Kidney (tissue), 22 donors: ENCODE measurements at regions of chr13 and their contacts with region 1.

Region 1: GRCh38 chr13:27270594-27271520 is at the start of gene RASL11A:
- DNase-seq: peak; percentile 86 to 97 (median 91)
- H3K4me3 ChIP-seq: peak within 1 kb of the TSS; percentile 78 to 98 (median 85)
- H3K27ac ChIP-seq: peak within 1 kb of the TSS; percentile 95
- H3K4me1 ChIP-seq: peaks cover 10 to 20% (median 11%) of the 10 kb centered on the region in 3 donors
- H3K27me3 ChIP-seq: no peaks in the 10 kb centered on the region
- CTCF ChIP-seq: peak; percentile 71
- total RNA-seq, gene RASL11A: 42.4 TPM

Region 2: GRCh38 chr13:26985285-26985878 is 285.5 kb before region 1 on chr13:
- intact Hi-C with region 1: loop called (anchors 10 kb)
- DNase-seq: peak in 3 of 5 donors; percentile 77 to 90 (median 85)
- H3K4me3 ChIP-seq: no peak overlapping the region
- H3K27ac ChIP-seq: no peak overlapping the region
- H3K4me1 ChIP-seq: peaks cover 0 to 6% (median 5%) of the 10 kb centered on the region in 3 donors
- H3K27me3 ChIP-seq: no peaks in the 10 kb centered on the region
- CTCF ChIP-seq: peak; percentile 86

Region 3: DNA sequence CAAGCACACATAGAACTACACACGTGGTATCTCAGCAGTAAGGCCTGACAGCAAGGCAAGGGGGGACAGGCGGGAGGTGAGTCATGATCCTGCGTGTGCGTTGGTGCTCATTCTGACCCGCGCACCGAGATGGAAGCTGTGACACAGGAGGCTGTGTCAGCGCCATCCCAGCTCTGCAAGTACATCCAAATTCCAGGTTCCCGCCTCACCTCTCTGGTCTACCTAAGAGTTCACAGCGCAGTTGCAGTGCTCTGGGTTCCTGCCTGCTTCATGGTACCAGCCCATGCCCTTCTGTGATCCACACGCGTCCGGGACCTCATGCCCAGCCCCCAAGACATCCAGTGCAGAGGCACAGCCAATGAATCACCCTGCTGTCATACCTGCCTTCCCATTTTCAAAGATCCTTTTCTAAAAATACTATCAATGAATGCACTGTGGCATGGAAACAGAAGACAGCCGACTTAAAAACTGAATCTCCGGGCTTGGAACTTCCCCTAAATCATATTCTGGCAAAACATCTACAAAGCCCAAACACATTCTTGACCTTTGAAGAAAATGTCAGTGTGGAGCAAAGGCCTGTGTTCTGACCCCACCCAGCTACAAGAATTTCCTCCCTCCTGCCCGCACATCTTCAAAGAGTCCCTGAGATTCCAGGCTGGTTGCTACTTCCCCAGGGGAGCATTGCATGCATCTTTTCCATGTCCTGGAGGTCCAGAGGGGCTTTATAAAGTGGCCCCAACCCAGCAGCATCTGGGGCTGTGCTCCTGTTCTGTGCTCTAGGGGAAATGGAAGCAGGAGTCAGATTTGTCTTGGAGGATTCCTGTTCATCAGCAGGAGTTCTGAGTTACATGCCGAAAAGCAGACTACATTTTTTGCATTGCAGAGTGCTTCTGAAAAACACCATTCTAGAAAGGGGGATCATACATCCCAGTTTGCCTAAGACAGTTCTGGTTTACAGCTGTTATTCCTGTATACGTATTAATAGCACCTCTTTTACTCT is 234.6 kb before region 1 on chr13:
- intact Hi-C with region 1: no loop called
- DNase-seq: no peak
- H3K4me3 ChIP-seq: no peak overlapping the region
- H3K27ac ChIP-seq: no peak overlapping the region
- H3K4me1 ChIP-seq: peaks cover 0 to 6% (median 0%) of the 10 kb centered on the region in 3 donors
- H3K27me3 ChIP-seq: no peaks in the 10 kb centered on the region
- CTCF ChIP-seq: no peak

Region 4: GRCh38 chr13:28067491-28067890 is 796.6 kb after region 1 on chr13:
- intact Hi-C with region 1: no loop called
- DNase-seq: no peak
- H3K4me3 ChIP-seq: no peak overlapping the region
- H3K27ac ChIP-seq: no peak overlapping the region
- H3K4me1 ChIP-seq: no peaks in the 10 kb centered on the region
- H3K27me3 ChIP-seq: no peaks in the 10 kb centered on the region
- CTCF ChIP-seq: no peak